ENCODE measurements at regions of chr15 and their contacts with region 1.

Region 1: GRCh38 chr15:75842722-75843551 is at the start of gene UBE2Q2:
- DNase-seq: peak; percentile 90 to 92 (median 92)
- ATAC-seq: peak; percentile 74
- H3K4me3 ChIP-seq: peak within 1 kb of the TSS; percentile 82
- H3K27ac ChIP-seq: peak within 1 kb of the TSS; percentile 94
- H3K4me1 ChIP-seq: peaks cover 32% of the 10 kb centered on the region in 2 experiments
- H3K27me3 ChIP-seq: no peaks in the 10 kb centered on the region
- CTCF ChIP-seq: no peak
- EP300 ChIP-seq: no peak
- POLR2A ChIP-seq: peak; percentile 64
- RAD21 ChIP-seq: no peak
- polyA plus RNA-seq, gene UBE2Q2: 6.2 to 7.1 TPM

Region 2: DNA sequence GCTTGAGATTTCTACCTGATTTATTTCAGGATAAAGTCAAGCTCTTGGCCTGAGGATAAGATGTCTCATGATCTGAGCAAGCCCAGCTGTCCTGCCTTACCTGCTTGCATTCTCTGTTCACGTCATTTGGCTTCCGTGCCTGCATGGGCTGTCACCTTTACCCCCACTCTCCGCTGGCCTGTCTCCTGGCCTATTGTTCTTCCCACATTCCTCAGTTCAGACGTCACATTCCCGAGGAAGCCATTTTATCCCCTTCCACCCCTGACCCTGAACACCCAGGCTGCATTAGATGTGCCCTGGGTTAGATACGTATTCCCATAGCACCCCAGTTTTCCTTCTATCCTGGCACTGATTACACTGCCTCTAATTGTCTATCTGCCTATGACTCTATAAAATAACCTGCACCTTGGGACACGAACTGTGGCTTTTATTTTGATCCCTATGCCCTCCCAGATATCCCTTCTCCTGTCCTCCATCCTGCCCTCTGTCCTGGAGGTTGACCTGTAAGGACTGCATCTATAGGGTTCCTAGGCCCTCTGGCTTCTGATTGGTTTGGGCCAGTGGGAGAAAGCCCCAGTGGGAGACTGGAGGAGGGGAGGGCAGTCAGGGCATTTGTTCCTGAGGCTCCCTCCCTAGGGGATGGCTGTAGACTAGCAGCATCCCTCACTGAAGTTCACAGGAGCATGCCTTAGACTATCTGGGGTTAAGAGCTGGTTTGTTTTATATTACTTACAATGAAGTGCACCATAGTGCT is 18.9 kb before region 1 on chr15:
- CTCF ChIA-PET with region 1: no interaction called
- POLR2A ChIA-PET with region 1: interaction called, 20 read pairs
- in situ Hi-C with region 1: no loop called
- intact Hi-C with region 1: no loop called
- DNase-seq: peak in 1 of 4 experiments; percentile 20
- ATAC-seq: no peak
- H3K4me3 ChIP-seq: no peak overlapping the region
- H3K27ac ChIP-seq: no peak overlapping the region
- H3K4me1 ChIP-seq: peaks cover 4 to 17% of the 10 kb centered on the region in 2 experiments; a peak in 4 of 5 replicates
- H3K27me3 ChIP-seq: no peaks in the 10 kb centered on the region
- CTCF ChIP-seq: no peak
- EP300 ChIP-seq: no peak
- POLR2A ChIP-seq: no peak
- RAD21 ChIP-seq: no peak

Region 3: DNA sequence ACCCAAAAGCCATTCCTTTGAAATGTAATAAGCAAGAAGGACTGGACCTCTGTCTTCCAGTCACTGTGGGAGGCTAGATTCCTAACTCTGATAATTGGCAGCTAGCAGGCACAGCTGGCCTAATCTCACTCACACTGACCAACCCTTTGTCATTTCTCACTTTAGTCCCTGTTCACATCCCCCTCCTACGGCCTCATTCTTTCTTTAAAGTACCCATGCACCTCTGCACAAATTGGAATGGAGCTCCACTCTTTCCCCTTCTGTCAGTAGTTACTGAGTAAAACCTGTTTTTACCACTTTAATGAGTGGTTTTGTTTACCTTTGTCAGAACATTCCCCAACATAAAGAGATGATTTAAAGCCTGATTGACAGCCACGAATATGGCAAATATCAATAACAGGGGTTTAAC is 11.4 kb before region 1 on chr15:
- CTCF ChIA-PET with region 1: no interaction called
- POLR2A ChIA-PET with region 1: interaction called, 38 read pairs
- in situ Hi-C with region 1: no loop called
- intact Hi-C with region 1: no loop called
- DNase-seq: peak in 3 of 4 experiments; percentile 29 to 87 (median 87)
- ATAC-seq: peak; percentile 90
- H3K4me3 ChIP-seq: no peak overlapping the region
- H3K27ac ChIP-seq: peak overlapping the region; percentile 71
- H3K4me1 ChIP-seq: peaks cover 16 to 43% of the 10 kb centered on the region in 2 experiments
- H3K27me3 ChIP-seq: no peaks in the 10 kb centered on the region
- CTCF ChIP-seq: no peak; a peak in 1 of 6 replicates
- EP300 ChIP-seq: peak; percentile 79
- POLR2A ChIP-seq: no peak; the same call in 1 of the 2 replicates
- RAD21 ChIP-seq: no peak

Region 4: DNA sequence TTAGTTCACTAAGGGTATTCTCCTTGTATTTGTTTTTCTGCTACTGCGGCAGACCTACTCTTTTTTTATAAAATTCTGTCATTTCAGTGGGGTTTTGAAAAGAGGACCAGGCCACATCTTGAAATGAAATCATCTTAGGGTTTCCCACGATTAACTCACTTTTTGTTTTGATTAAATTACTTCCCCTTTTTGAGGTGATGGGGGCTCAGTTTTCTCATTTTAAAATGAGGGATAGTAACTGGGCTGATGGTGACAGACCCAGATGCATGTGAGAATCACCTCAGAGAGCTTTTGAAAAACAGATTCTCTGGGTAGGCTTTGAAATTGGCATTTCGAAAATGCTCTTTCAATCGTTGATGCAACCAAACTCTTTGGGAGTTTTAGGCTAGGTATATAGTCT is 24.5 kb after region 1 on chr15:
- CTCF ChIA-PET with region 1: no interaction called
- POLR2A ChIA-PET with region 1: interaction called, 11 read pairs
- in situ Hi-C with region 1: no loop called
- intact Hi-C with region 1: no loop called
- DNase-seq: no peak
- ATAC-seq: no peak
- H3K4me3 ChIP-seq: no peak overlapping the region
- H3K27ac ChIP-seq: no peak overlapping the region
- H3K4me1 ChIP-seq: peaks cover 0 to 26% of the 10 kb centered on the region in 2 experiments; a peak in 2 of 5 replicates
- H3K27me3 ChIP-seq: no peaks in the 10 kb centered on the region
- CTCF ChIP-seq: no peak
- EP300 ChIP-seq: no peak
- POLR2A ChIP-seq: no peak
- RAD21 ChIP-seq: no peak

Region 5: DNA sequence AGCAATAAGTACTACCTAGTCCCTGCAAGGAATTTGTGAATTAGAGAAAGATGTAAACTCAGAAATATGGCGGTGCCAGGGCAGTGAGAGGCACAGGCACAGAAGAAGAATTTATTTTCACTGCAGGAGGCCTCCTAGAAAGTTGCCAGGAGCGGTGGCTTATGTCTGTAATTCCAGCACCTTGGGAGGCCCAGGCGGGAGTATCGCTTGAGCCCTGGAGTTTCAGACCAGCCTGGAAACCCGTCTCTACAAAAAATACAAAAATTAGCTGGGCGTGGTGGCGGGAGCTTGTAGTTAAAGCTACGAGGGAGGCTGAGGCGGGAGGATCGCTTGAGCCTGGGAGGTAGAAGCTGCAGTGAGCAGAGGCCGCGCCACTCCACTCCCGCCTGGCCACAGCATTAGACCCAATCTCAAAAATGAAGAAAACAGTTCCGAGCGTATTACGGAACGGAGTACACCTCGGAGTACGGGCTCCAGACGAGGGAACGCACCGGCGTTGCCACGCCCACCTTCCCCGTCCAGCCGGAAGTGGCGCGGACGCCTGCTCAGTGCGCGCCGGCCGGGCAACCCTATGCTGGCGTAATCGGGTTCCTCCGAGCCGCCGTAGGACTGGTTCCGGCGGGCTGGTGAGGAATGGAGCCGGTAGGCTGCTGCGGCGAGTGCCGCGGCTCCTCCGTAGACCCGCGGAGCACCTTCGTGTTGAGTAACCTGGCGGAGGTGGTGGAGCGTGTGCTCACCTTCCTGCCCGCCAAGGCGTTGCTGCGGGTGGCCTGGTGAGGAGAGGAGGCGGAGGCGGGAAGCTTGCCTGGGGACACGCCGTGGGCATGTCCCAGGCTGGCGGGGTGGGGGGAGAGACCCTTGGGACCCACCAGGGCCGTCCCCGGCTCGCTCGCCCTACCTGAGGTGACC is 60.6 kb after region 1 on chr15 and contains the start of gene FBXO22:
- CTCF ChIA-PET with region 1: no interaction called
- POLR2A ChIA-PET with region 1: interaction called, 4 read pairs
- in situ Hi-C with region 1: no loop called
- intact Hi-C with region 1: loop called (anchors 2 kb)
- DNase-seq: peak; percentile 85 to 96 (median 86)
- ATAC-seq: peak; percentile 95
- H3K4me3 ChIP-seq: peak within 1 kb of the TSS; percentile 89
- H3K27ac ChIP-seq: peak within 1 kb of the TSS; percentile 91
- H3K4me1 ChIP-seq: peaks cover 19 to 32% of the 10 kb centered on the region in 2 experiments
- H3K27me3 ChIP-seq: no peaks in the 10 kb centered on the region
- CTCF ChIP-seq: no peak; a peak in 1 of 6 replicates
- EP300 ChIP-seq: no peak
- POLR2A ChIP-seq: peak; percentile 92
- RAD21 ChIP-seq: no peak
- polyA plus RNA-seq, gene FBXO22: 24.4 to 31.0 TPM

Measured in K562 (cell line).